ENCODE measurements at regions of chr13 and their contacts with region 1.

Region 1: DNA sequence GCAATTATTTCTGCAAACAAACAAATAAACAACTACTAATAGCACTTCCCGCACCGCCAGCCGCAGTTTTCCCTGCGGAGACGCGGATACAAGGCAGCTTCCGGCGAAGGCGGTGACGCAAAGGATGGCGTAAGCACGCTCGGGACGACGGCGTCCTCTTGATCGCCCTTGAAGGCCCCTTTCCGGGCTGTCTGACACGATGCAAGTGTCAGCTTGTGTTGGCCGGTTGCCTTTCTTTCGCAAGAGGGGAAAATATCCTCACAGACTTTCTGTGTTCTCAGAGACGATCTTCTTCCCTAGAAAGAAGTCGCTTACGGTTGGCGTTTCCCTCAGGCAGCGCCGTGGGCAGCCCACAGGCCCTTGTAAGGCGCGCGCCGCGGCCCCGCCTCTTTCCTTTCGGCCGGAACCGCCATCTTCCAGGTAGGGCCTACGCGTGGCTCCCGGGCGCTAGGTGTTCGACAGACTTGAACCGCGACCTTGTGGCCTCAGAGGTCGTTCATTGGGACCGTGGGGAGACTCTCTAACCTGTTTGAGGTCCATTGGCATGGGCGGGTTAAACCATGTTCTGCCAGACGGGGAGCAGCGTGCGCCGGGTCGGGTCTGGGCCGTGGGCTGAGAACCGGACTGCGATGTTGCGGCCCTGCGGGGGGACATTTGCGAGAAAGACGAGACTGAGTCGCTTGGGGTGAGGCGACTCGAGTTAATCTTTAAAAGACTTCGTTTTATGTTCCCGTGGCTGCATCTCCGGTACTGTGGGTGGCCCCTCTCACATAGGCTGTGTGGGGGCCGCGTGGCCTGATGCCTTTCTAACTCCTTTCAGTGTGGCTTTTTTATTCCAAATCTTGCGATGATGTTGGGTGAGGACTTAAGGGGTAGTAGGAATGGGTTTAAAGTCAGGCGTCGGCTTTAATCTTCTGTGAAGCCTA is at the start of gene RPL21:
- DNase-seq: peak; percentile 86
- ATAC-seq: peak; percentile 90
- H3K4me3 ChIP-seq: peak within 1 kb of the TSS; percentile 94
- H3K27ac ChIP-seq: peak within 1 kb of the TSS; percentile 89
- H3K4me1 ChIP-seq: no peaks in the 10 kb centered on the region
- H3K27me3 ChIP-seq: no peaks in the 10 kb centered on the region
- CTCF ChIP-seq: no peak
- EP300 ChIP-seq: no peak
- POLR2A ChIP-seq: peak; percentile 99
- RAD21 ChIP-seq: no peak
- polyA plus RNA-seq, gene RPL21: 8,593 to 9,760 TPM

Region 2: DNA sequence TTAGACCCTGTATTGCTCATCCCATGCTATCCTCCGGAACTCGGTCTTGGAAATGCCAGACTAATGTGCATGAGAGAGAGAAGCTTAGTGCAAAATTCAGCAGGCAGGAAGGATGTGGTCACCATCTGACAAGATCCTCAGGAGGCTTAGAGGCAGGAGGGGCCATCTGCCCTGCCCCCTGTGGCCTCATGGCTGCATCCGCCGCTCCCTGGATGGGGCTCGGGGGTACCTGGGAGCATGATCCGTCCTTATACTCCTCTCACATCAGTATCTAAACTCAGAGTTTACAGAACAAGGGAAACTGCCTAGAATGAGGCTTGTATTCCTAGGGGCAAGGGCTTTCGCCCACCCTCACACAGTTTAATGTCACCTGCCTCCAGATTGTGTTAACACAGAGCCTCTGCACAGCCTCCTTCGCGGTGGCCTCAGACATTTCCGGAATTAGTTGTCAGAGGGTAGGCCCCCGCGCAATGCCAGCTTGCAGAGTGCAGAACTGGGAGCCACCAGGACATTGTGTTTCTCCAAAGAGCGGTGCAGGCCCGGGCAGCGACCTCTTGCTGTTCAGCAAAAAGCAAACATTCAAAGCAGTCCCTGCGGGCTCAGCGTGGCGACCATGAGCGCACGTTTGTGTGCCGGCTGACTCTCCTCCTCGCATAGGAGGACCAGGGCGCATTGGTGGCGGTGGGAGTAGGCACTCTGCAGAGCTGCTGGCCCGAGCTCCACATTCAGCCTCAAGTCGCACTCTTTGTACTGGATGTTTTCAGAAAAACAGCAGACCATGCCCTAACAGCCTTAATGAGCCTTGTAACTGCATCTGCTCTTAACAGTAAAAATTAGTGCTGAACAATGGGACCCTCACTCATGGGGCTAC is 529.9 kb before region 1 on chr13:
- CTCF ChIA-PET with region 1: no interaction called
- POLR2A ChIA-PET with region 1: no interaction called
- RAD21 ChIA-PET with region 1: no interaction called
- SMC1A ChIA-PET with region 1: no interaction called
- in situ Hi-C with region 1: no loop called
- intact Hi-C with region 1: no loop called
- DNase-seq: no peak
- ATAC-seq: peak; percentile 43
- H3K4me3 ChIP-seq: no peak overlapping the region
- H3K27ac ChIP-seq: no peak overlapping the region
- H3K4me1 ChIP-seq: peaks cover 7% of the 10 kb centered on the region
- H3K27me3 ChIP-seq: no peaks in the 10 kb centered on the region
- CTCF ChIP-seq: no peak
- EP300 ChIP-seq: no peak
- POLR2A ChIP-seq: no peak
- RAD21 ChIP-seq: no peak

Region 3: DNA sequence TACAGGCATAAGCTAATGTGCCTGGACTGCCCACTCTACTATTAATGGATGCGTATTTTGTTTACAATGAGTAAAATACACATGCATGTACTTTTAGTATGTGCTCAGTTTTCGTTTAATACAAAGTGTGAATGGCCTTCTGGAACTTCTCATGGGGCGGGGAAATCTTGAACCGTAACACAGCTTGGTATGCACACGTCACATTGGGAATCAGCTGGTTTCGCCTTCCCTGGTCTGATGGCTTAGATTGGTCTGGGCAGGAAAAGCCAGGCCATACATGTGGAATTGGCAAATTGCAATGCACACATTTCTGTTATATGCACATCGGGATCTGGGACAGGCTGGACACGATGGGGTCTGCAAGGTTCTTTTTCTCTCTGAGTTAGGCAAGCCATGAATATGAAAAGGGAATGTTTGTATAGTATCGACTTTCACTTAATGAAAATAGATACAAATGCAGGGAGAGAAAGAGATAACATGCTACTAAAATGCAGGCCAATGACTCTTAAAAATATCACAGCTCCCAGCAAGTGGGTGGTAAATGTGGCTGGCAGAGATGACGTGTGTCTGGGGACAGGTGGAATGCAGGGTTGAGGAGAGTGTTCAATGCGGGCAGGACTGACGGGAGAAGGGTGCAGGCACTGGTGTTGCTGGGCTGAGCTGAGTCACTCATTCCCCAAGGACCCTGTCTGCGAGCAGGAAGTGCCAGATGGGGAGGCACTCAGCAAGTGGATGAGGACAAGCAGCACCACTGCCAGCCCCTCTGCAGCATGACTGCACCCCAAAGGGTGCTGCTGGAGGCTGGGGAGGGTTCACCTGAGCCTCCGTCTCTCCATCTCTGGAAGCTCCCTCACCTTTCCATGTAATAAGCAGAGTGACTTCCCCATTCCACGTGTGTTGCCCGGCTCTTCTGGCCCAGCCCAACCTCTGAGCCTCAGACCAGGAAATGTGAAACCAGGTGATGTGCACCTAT is 286.9 kb before region 1 on chr13:
- CTCF ChIA-PET with region 1: no interaction called
- POLR2A ChIA-PET with region 1: no interaction called
- RAD21 ChIA-PET with region 1: no interaction called
- SMC1A ChIA-PET with region 1: no interaction called
- in situ Hi-C with region 1: no loop called
- intact Hi-C with region 1: no loop called
- DNase-seq: no peak
- ATAC-seq: peak; percentile 39
- H3K4me3 ChIP-seq: no peak overlapping the region
- H3K27ac ChIP-seq: no peak overlapping the region
- H3K4me1 ChIP-seq: no peaks in the 10 kb centered on the region
- H3K27me3 ChIP-seq: no peaks in the 10 kb centered on the region
- CTCF ChIP-seq: no peak
- EP300 ChIP-seq: no peak
- POLR2A ChIP-seq: no peak
- RAD21 ChIP-seq: no peak

Region 4: GRCh38 chr13:27117158-27117557 is 134.3 kb before region 1 on chr13:
- CTCF ChIA-PET with region 1: no interaction called
- POLR2A ChIA-PET with region 1: no interaction called
- RAD21 ChIA-PET with region 1: no interaction called
- SMC1A ChIA-PET with region 1: no interaction called
- in situ Hi-C with region 1: no loop called
- intact Hi-C with region 1: no loop called
- DNase-seq: no peak
- ATAC-seq: no peak
- H3K4me3 ChIP-seq: no peak overlapping the region
- H3K27ac ChIP-seq: no peak overlapping the region
- H3K4me1 ChIP-seq: peaks cover 31% of the 10 kb centered on the region
- H3K27me3 ChIP-seq: no peaks in the 10 kb centered on the region
- CTCF ChIP-seq: no peak
- EP300 ChIP-seq: no peak
- POLR2A ChIP-seq: no peak
- RAD21 ChIP-seq: no peak

Region 5: DNA sequence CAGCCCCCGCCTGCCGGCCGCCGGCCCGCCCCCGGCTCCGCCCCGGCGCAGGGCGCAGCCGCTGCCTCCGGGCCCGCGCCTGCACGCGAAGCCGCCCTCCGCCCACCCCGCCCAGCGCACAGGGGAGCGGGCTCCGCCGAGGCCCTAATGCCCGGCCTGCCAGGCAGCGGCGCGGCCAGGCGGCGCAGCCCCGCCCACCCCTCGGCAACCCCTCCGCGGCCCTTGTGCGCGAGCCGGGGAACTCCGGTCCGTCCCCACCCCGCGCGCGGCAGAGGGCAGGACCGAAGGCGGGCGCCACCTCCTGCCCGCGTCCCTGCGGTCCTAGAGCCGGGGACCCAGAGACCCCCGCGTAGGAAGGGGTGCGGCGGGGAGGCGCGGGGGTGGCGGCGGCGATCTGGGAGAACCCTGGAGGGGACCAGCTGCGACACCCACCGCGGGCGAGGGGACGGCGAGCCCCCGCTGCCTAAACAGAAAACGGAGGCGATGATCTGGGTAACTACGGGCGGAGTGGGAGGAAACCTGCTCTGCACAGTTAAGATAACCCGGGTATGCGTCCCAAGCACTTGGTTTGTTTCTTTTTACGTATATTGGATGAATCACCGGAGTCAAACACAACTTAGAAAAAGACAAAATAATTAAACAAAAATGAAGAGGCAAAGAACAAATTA is 79.5 kb before region 1 on chr13:
- CTCF ChIA-PET with region 1: no interaction called
- POLR2A ChIA-PET with region 1: interaction called, 3 read pairs
- RAD21 ChIA-PET with region 1: interaction called, 3 read pairs
- SMC1A ChIA-PET with region 1: interaction called, 3 read pairs
- in situ Hi-C with region 1: loop called (anchors 5 kb)
- intact Hi-C with region 1: loop called (anchors 1 kb)
- DNase-seq: no peak
- ATAC-seq: peak; percentile 87
- H3K4me3 ChIP-seq: peak overlapping the region; percentile 59
- H3K27ac ChIP-seq: peak overlapping the region; percentile 74
- H3K4me1 ChIP-seq: peaks cover 11% of the 10 kb centered on the region
- H3K27me3 ChIP-seq: no peaks in the 10 kb centered on the region
- CTCF ChIP-seq: peak in 2 of 3 experiments; percentile 7 to 19; a peak in 1 of 6 replicates
- EP300 ChIP-seq: peak in 1 of 2 experiments; percentile 26; a peak in 1 of 4 replicates
- POLR2A ChIP-seq: peak; percentile 7; the same call in 1 of the 2 replicates
- RAD21 ChIP-seq: peak; percentile 23; the same call in 1 of the 2 replicates

Region 6: DNA sequence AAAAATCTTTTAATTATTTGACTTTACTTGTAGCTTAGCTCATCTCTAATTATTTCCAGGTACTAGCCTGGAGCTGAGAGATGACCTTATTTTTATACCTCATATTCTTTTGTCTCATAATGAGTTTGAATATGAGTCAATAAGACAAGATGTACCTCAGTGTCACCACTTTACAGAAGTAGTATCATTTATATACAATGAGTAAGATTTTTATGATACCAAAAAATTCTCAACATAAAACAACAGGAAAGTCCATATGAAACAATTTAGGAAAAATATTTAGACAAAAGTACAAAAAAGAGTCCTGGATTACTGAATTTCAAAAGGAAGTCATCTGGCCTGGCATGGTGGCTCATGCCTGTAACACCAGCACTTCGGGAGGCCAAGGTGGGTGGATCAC is 58.5 kb before region 1 on chr13:
- CTCF ChIA-PET with region 1: no interaction called
- POLR2A ChIA-PET with region 1: no interaction called
- RAD21 ChIA-PET with region 1: no interaction called
- SMC1A ChIA-PET with region 1: no interaction called
- in situ Hi-C with region 1: no loop called
- intact Hi-C with region 1: loop called (anchors 1 kb)
- DNase-seq: no peak
- ATAC-seq: peak; percentile 41; the same call in 1 of the 3 replicates
- H3K4me3 ChIP-seq: no peak overlapping the region
- H3K27ac ChIP-seq: no peak overlapping the region
- H3K4me1 ChIP-seq: no peaks in the 10 kb centered on the region
- H3K27me3 ChIP-seq: no peaks in the 10 kb centered on the region
- CTCF ChIP-seq: no peak
- EP300 ChIP-seq: no peak
- POLR2A ChIP-seq: no peak
- RAD21 ChIP-seq: no peak

Region 7: DNA sequence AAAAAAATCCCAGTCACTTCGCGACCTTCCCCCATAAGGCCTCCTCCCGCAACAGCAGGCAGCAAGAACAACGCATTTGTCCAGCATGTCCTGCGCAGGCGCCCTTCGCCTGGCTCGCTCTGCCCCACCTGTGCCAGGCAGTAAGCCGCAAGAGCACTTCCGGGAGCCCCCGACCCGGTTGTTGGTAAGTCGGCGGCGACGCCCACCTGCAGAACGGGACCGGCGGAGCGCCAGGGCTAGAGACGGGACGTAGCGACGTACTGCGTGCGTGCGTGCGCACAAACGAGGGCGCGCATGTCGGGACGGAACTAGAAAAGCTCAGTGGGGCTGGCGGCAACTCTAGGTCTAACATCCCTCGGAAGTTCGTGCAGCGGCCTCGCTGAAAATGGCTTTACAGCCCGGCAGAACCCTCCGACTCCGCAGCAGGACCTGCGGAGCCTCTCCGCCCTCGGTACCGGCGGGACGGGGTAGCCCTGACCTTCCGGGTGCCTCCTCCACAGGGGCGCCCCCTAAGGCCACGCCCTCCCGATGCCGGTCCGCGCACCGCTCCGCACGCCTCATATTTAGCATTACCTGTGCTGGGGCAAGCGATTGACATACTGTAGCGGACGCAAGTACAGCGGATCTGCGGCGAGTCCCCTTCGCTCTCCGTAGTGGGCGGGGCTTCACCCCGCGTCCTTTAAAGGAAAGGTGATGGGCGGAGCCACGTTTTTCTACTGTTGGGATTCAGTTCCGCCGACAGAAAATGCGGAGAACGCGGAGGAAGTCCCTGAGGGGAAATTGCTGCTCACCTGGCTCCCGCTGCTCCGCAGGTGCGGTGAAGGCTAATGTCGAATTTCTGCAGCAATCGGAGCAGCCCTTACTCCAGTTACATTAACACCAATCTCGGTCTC is 198.8 kb after region 1 on chr13 and contains the start of gene MTIF3:
- CTCF ChIA-PET with region 1: no interaction called
- POLR2A ChIA-PET with region 1: no interaction called
- RAD21 ChIA-PET with region 1: no interaction called
- SMC1A ChIA-PET with region 1: no interaction called
- in situ Hi-C with region 1: no loop called
- intact Hi-C with region 1: loop called (anchors 2 kb)
- DNase-seq: peak; percentile 87
- ATAC-seq: peak; percentile 93
- H3K4me3 ChIP-seq: peak within 1 kb of the TSS; percentile 87
- H3K27ac ChIP-seq: peak within 1 kb of the TSS; percentile 86
- H3K4me1 ChIP-seq: peaks cover 11% of the 10 kb centered on the region
- H3K27me3 ChIP-seq: no peaks in the 10 kb centered on the region
- CTCF ChIP-seq: no peak
- EP300 ChIP-seq: no peak
- POLR2A ChIP-seq: peak; percentile 98
- RAD21 ChIP-seq: 0 out of 2 replicates have a peak, but pooled peaks have one; percentile 16
- polyA plus RNA-seq, gene MTIF3: 64.7 to 73.9 TPM

Measured in GM12878 (cell line).